Ovary (tissue), 10 donors: ENCODE measurements at regions of chr3 and their contacts with region 1.

Region 1: GRCh38 chr3:25594007-25594502 is 70.7 kb downstream of the TOP2B start:
- DNase-seq: no peak
- H3K4me3 ChIP-seq: no peak overlapping the region
- H3K27ac ChIP-seq: peak overlapping the region in 1 of 2 donors; percentile 14
- H3K4me1 ChIP-seq: no peaks in the 10 kb centered on the region
- H3K27me3 ChIP-seq: no peaks in the 10 kb centered on the region
- CTCF ChIP-seq: peak; percentile 65 to 84 (median 68)
- EP300 ChIP-seq: no peak
- POLR2A ChIP-seq: no peak

Region 2: DNA sequence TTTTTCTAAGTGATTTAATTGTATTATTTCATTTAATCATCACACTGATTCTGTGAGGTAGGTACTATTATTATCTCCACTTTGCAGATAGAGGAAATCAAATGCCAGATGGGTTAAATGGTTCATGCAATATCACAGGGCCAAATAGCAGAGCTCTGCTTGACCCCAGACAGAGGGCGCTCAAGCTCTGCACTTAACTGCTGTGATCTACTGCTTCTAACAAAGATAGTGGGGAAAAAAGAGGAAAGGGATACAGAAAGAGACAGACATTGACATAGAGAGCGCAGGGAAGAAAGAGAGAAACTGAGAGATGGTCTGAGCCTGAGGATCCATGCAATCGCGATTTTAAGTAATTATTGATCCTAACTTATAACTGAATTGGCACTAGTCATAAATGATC is 820.3 kb before region 1 on chr3:
- intact Hi-C with region 1: loop called in 1 of 4 experiments (anchors 10 kb)
- DNase-seq: peak in 2 of 5 donors; percentile 14 to 32
- H3K4me3 ChIP-seq: no peak overlapping the region
- H3K27ac ChIP-seq: no peak overlapping the region
- H3K4me1 ChIP-seq: no peaks in the 10 kb centered on the region
- H3K27me3 ChIP-seq: no peaks in the 10 kb centered on the region
- CTCF ChIP-seq: no peak
- EP300 ChIP-seq: no peak
- POLR2A ChIP-seq: no peak

Region 3: GRCh38 chr3:24952388-24952787 is 641.7 kb before region 1 on chr3:
- intact Hi-C with region 1: loop called in 1 of 4 experiments (anchors 10 kb)
- DNase-seq: no peak
- H3K4me3 ChIP-seq: no peak overlapping the region
- H3K27ac ChIP-seq: no peak overlapping the region
- H3K4me1 ChIP-seq: no peaks in the 10 kb centered on the region
- H3K27me3 ChIP-seq: no peaks in the 10 kb centered on the region
- CTCF ChIP-seq: no peak
- EP300 ChIP-seq: no peak
- POLR2A ChIP-seq: no peak

Region 4: GRCh38 chr3:24963762-24964625 is 630.1 kb before region 1 on chr3:
- intact Hi-C with region 1: loop called in 3 of 4 experiments (anchors 10 kb)
- DNase-seq: no peak
- H3K4me3 ChIP-seq: no peak overlapping the region
- H3K27ac ChIP-seq: no peak overlapping the region
- H3K4me1 ChIP-seq: no peaks in the 10 kb centered on the region
- H3K27me3 ChIP-seq: no peaks in the 10 kb centered on the region
- CTCF ChIP-seq: peak in 2 of 3 donors; percentile 20 to 21
- EP300 ChIP-seq: no peak
- POLR2A ChIP-seq: no peak

Region 5: GRCh38 chr3:25573386-25574171 is 20.5 kb before region 1 on chr3:
- intact Hi-C with region 1: no loop called
- DNase-seq: no peak
- H3K4me3 ChIP-seq: no peak overlapping the region
- H3K27ac ChIP-seq: no peak overlapping the region
- H3K4me1 ChIP-seq: no peaks in the 10 kb centered on the region
- H3K27me3 ChIP-seq: no peaks in the 10 kb centered on the region
- CTCF ChIP-seq: no peak
- EP300 ChIP-seq: no peak
- POLR2A ChIP-seq: no peak